Naive thymus-derived CD4-positive, alpha-beta T cell (primary cell): ENCODE measurements at regions of chr21 and their contacts with region 1.

Region 1: DNA sequence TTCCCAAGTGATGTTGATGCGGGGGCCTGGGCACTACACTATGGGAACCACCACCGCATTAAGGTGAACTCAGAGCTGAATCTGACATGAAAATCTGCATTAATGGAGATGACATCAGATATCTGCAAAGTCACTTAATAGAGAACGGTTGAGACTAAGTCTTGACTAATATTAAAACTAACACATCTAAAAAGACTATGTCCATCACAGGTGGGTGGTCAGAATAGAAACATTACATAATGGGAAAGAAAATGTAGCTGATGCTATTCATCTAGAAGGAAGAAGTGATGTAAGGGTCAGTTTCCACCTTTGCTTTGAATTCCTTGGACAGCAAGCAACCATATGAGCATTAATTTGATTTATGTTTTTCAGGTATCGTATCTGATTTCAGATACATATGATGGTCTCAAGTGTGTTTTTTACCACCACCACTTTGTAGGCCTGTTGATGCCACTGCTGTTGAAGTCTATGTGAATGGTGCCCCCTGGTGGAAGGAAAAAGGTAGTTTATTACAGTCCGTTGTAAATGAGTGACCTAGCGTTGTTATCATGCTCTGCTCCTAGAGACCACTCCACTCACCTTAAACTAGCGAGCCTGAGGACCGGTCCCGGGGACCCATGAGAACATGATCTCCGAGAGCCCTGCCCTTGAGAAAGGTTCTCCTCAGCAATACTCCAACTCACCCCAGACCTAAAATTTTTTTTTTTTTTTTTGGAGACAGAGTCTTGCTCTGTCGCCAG is 73.5 kb downstream of the BACH1 start:
- DNase-seq: peak in 8 of 9 donors; percentile 41 to 70 (median 61)
- ATAC-seq: peak; percentile 94
- H3K4me3 ChIP-seq: no peak overlapping the region
- H3K4me3 Mint-ChIP-seq: no peak overlapping the region
- H3K27ac ChIP-seq: no peak overlapping the region
- H3K27ac Mint-ChIP-seq: peak overlapping the region in 3 of 9 donors; percentile 9 to 60 (median 30)
- H3K4me1 ChIP-seq: peaks cover 9 to 10% of the 10 kb centered on the region in 2 donors
- H3K4me1 Mint-ChIP-seq: peaks cover 5 to 15% (median 10%) of the 10 kb centered on the region in 7 donors
- H3K27me3 ChIP-seq: no peaks in the 10 kb centered on the region
- H3K27me3 Mint-ChIP-seq: no peaks in the 10 kb centered on the region

Region 2: DNA sequence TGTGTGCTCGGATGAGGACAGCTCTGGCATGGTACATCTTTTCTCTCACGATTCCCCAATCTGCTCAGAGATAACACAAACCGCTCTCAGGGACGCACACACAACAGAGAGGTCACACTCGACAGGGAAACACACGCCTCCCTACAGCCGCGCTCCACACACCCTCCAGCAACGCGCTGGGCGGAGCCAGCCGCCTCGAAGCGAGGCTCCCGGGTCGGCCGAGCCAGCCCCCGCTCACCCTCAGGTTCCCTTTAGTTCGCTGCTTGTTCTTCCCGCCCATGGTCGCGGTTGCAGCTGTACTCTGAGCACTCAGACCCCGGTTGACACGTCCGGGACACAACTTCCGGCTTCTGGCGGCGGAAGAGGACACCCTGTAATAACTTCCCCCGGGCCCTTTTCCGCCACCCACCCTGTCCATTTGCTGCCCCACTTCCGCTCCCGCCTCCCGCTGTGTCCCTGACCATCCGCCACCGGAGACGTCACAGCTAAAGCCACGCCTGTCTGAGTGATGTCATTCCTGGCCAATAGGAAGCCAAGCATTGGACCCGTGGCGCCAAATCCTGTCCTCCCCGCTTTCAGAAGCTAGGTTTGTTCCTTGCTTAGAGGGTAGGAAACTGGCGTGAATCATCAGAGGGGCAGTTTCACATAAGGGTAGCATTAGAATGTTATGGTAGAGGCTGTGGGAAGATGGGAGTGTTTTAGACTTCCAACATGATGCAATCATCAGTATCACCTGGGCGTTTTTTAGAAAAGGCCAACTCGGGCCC is 379.5 kb before region 1 on chr21 and contains the start of gene LTN1:
- CTCF ChIA-PET with region 1: no interaction called
- POLR2A ChIA-PET with region 1: no interaction called
- intact Hi-C with region 1: loop called in 1 of 2 experiments (anchors 10 kb)
- DNase-seq: peak; percentile 91 to 99 (median 98)
- ATAC-seq: peak; percentile 98
- H3K4me3 ChIP-seq: peak within 1 kb of the TSS; percentile 86
- H3K4me3 Mint-ChIP-seq: peak within 1 kb of the TSS; percentile 89 to 99 (median 94)
- H3K27ac ChIP-seq: peak within 1 kb of the TSS; percentile 87
- H3K27ac Mint-ChIP-seq: peak within 1 kb of the TSS; percentile 94 to 99 (median 98)
- H3K4me1 ChIP-seq: peaks cover 11 to 23% of the 10 kb centered on the region in 2 donors
- H3K4me1 Mint-ChIP-seq: peaks cover 26 to 58% (median 42%) of the 10 kb centered on the region in 7 donors
- H3K27me3 ChIP-seq: no peaks in the 10 kb centered on the region
- H3K27me3 Mint-ChIP-seq: no peaks in the 10 kb centered on the region
- total RNA-seq, gene LTN1: 27.3 to 36.3 (median 31.3) TPM

Region 3: DNA sequence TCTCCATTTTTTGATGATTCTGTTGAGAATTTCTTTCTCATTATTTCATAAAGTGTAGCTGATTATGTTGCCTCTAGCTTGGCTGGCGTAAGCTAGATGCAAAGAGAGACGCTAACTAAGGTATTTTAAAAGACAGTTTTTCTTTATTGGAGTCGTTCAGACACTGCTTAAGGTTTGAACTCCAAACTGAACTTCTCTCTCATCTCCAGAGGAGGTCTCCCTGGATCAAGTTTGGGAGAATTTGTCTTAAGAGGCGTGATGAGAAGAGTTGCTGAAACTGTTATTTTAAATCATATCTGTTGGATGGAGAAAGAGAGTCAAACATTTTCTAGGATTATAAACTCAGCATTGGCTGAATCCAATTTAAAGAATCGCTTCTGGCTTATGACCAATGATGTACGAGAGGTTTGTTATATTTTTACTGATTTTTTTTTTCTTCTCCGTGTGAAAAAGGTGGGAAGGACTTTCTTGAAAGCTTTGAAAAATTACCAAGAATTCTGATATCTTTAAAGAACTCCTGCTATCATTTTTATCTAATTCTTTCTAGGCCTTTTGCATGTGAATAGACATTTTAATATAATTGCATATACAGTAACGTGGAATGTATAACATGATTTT is 207.8 kb before region 1 on chr21:
- CTCF ChIA-PET with region 1: no interaction called
- POLR2A ChIA-PET with region 1: no interaction called
- intact Hi-C with region 1: loop called (anchors 1 kb)
- DNase-seq: peak in 1 of 9 donors; percentile 6
- ATAC-seq: no peak
- H3K4me3 ChIP-seq: no peak overlapping the region
- H3K4me3 Mint-ChIP-seq: no peak overlapping the region
- H3K27ac ChIP-seq: no peak overlapping the region
- H3K27ac Mint-ChIP-seq: no peak overlapping the region
- H3K4me1 ChIP-seq: no peaks in the 10 kb centered on the region
- H3K4me1 Mint-ChIP-seq: peaks cover 0 to 15% (median 0%) of the 10 kb centered on the region in 7 donors
- H3K27me3 ChIP-seq: no peaks in the 10 kb centered on the region
- H3K27me3 Mint-ChIP-seq: peaks cover 0 to 3% (median 0%) of the 10 kb centered on the region in 5 donors

Region 4: DNA sequence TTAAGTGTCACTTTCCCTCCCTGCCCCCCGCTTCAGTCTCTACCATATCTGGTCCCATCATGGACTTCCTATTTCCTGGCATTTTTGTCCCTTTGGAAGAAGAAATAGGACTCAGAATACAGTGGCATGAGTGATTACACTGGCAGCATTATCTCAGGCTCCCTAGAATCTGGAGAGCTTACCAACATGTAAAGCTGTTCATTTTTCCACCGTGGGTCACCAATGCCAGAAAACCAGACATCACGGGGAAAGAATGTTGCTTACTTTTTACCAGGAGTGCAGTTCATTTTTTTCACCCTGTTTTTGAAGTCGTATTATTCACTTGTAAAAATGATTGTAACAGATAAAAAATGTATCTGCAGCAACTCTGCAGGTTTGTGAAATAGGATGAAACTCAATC is 28.7 kb before region 1 on chr21:
- CTCF ChIA-PET with region 1: interaction called, 3 read pairs
- POLR2A ChIA-PET with region 1: interaction called, 3 read pairs
- intact Hi-C with region 1: loop called (anchors 1 kb)
- DNase-seq: no peak
- ATAC-seq: no peak
- H3K4me3 ChIP-seq: no peak overlapping the region
- H3K4me3 Mint-ChIP-seq: no peak overlapping the region
- H3K27ac ChIP-seq: no peak overlapping the region
- H3K27ac Mint-ChIP-seq: no peak overlapping the region
- H3K4me1 ChIP-seq: peaks cover 0 to 6% of the 10 kb centered on the region in 2 donors
- H3K4me1 Mint-ChIP-seq: peaks cover 4 to 31% (median 15%) of the 10 kb centered on the region in 7 donors
- H3K27me3 ChIP-seq: no peaks in the 10 kb centered on the region
- H3K27me3 Mint-ChIP-seq: no peaks in the 10 kb centered on the region

Region 5: DNA sequence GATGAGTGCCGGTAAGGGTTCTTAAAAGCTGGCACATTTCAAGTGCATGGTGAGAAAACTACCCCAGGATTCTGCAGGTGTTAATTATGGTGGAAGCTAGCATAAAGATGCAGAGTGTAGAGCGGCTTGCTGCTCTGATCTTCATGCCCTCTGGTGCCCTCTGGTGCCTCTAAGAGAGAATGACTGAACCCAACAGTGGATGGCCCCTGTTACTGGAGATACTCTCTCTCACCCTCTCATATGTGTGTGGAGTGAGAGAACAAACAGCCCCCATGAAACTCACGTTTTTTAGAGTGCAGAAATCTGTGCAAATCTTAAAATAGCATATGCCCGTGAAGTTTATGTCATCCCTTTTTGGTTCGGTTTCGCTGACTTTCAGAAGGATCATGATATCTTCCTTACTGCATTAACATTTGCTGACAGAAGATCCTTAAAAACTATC is 477.5 kb after region 1 on chr21:
- CTCF ChIA-PET with region 1: interaction called, 3 read pairs
- POLR2A ChIA-PET with region 1: no interaction called
- intact Hi-C with region 1: loop called in 1 of 2 experiments (anchors 5 kb)
- DNase-seq: peak in 8 of 9 donors; percentile 5 to 56 (median 35)
- ATAC-seq: peak; percentile 91
- H3K4me3 ChIP-seq: no peak overlapping the region
- H3K4me3 Mint-ChIP-seq: no peak overlapping the region
- H3K27ac ChIP-seq: no peak overlapping the region
- H3K27ac Mint-ChIP-seq: no peak overlapping the region
- H3K4me1 ChIP-seq: no peaks in the 10 kb centered on the region
- H3K4me1 Mint-ChIP-seq: no peaks in the 10 kb centered on the region
- H3K27me3 ChIP-seq: no peaks in the 10 kb centered on the region
- H3K27me3 Mint-ChIP-seq: peaks cover 7 to 20% (median 9%) of the 10 kb centered on the region in 5 donors

Region 6: GRCh38 chr21:31158789-31159581 is 1786.8 kb after region 1 on chr21:
- CTCF ChIA-PET with region 1: no interaction called
- POLR2A ChIA-PET with region 1: no interaction called
- intact Hi-C with region 1: no loop called
- DNase-seq: peak in 7 of 9 donors; percentile 52 to 74 (median 69)
- ATAC-seq: peak; percentile 90
- H3K4me3 ChIP-seq: peak overlapping the region; percentile 28
- H3K4me3 Mint-ChIP-seq: peak overlapping the region; percentile 70 to 88 (median 78)
- H3K27ac ChIP-seq: peak overlapping the region; percentile 69
- H3K27ac Mint-ChIP-seq: peak overlapping the region; percentile 83 to 99 (median 95)
- H3K4me1 ChIP-seq: peaks cover 0 to 75% of the 10 kb centered on the region in 2 donors
- H3K4me1 Mint-ChIP-seq: peaks cover 49 to 94% (median 89%) of the 10 kb centered on the region in 7 donors
- H3K27me3 ChIP-seq: no peaks in the 10 kb centered on the region
- H3K27me3 Mint-ChIP-seq: no peaks in the 10 kb centered on the region